ENCODE measurements at regions of chr6 and their contacts with region 1.

Region 1: DNA sequence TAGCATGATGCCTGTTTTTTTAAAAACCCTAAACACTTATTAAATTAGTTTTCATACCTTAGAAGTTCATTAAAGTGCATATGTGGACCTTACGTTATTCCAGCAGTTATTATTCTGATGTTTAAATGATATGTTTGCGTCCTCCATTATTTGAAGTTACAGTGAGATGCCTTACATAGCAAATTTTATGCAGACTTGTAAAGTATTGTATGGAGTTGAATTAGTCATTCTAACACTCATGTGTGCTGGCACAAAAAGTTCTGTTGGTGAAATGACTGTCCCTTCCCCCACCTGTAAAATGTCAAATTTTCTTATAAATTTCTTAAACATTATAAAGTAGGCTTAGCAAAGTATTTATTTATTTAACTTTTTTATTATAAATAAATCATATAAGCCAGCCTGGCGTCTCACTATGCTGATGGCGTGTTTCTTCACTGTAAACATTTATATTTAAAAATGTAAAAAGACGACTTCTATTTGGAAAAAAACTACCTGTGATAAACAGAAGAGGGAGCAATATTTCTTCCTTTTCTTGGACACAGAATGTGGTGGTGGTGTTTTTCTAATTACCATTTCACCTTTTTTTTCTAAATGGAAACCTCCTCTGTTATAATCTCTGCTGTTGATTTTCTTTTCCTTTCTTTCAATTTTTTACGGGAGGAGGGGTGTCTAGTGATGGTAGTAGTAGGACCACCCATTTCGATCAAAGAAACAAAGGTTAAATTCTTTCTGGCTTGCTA is 155.4 kb downstream of the RFPL4B start:
- H3K4me3 ChIP-seq: no peak overlapping the region
- H3K27ac ChIP-seq: no peak overlapping the region
- H3K4me1 ChIP-seq: peaks cover 3% of the 10 kb centered on the region; the same call in 1 of the 2 replicates
- CTCF ChIP-seq: no peak

Region 2: GRCh38 chr6:112618849-112619248 is 116.3 kb after region 1 on chr6:
- CTCF ChIA-PET with region 1: interaction called, 11 read pairs
- POLR2A ChIA-PET with region 1: no interaction called
- H3K4me3 ChIP-seq: no peak overlapping the region
- H3K27ac ChIP-seq: no peak overlapping the region
- H3K4me1 ChIP-seq: no peaks in the 10 kb centered on the region
- CTCF ChIP-seq: no peak

Measured in HEK293 (cell line).